Natural killer cell (primary cell): ENCODE measurements at regions of chr4 and their contacts with region 1.

Region 1: DNA sequence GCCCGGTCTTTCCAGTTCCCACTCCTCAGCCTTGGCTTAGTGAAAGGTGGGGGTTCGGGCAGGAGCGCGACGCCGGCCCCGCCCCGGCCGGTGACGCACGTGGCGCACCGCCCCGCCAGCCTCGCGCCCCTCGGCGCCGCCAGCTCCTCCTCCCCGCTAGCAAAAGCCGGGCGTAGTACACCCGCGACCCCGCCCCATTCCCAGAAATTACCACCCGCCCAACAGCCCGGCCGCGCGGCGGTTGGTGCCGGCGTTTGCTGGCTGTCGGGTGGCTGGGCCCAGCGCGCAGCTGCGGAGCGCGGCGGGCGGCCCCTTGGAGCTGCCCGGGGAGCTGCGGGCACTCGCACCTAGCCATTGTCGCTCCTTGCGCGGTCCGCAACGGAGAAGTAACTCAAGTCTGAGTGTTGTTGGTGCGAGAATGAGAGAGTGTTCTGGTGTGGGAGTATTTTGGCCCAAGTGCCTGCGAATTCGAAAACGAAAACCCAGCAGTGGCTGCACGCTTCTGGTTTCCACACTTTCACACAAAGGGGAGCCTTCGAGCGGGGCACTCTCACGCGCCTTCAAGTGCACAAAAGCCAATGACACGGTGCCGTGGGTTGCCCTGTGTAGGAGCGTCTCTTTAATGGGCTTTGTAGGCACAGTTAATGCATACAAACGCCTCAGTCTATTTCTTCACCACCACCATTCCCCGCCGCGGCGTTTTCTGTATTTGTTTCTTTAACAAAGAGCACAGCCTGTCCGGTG is 1.0 kb upstream of the ELF2 start:
- DNase-seq: peak; percentile 81 to 94
- ATAC-seq: peak; percentile 64 to 85 (median 73)
- H3K4me3 ChIP-seq: peak overlapping the region; percentile 64
- H3K4me3 Mint-ChIP-seq: peak overlapping the region; percentile 94
- H3K27ac ChIP-seq: peak overlapping the region; percentile 89
- H3K27ac Mint-ChIP-seq: peak overlapping the region; percentile 89 to 93
- H3K4me1 ChIP-seq: peaks cover 15% of the 10 kb centered on the region
- H3K4me1 Mint-ChIP-seq: peaks cover 16 to 17% of the 10 kb centered on the region in 2 donors
- H3K27me3 ChIP-seq: no peaks in the 10 kb centered on the region
- H3K27me3 Mint-ChIP-seq: no peaks in the 10 kb centered on the region
- CTCF ChIP-seq: no peak

Region 2: GRCh38 chr4:139015269-139015947 is 162.6 kb before region 1 on chr4 and contains the start of gene NOCT:
- intact Hi-C with region 1: loop called (anchors 2 kb)
- DNase-seq: peak; percentile 90 to 97
- ATAC-seq: peak; percentile 86 to 95 (median 87)
- H3K4me3 ChIP-seq: peak within 1 kb of the TSS; percentile 50
- H3K4me3 Mint-ChIP-seq: peak within 1 kb of the TSS; percentile 94
- H3K27ac ChIP-seq: peak within 1 kb of the TSS; percentile 77
- H3K27ac Mint-ChIP-seq: peak within 1 kb of the TSS; percentile 88 to 98
- H3K4me1 ChIP-seq: peaks cover 15% of the 10 kb centered on the region
- H3K4me1 Mint-ChIP-seq: peaks cover 10 to 11% of the 10 kb centered on the region in 2 donors
- H3K27me3 ChIP-seq: no peaks in the 10 kb centered on the region
- H3K27me3 Mint-ChIP-seq: peaks cover 0 to 4% of the 10 kb centered on the region in 2 donors
- CTCF ChIP-seq: no peak
- total RNA-seq, gene NOCT: 17.6 to 28.5 (median 20.9) TPM

Region 3: DNA sequence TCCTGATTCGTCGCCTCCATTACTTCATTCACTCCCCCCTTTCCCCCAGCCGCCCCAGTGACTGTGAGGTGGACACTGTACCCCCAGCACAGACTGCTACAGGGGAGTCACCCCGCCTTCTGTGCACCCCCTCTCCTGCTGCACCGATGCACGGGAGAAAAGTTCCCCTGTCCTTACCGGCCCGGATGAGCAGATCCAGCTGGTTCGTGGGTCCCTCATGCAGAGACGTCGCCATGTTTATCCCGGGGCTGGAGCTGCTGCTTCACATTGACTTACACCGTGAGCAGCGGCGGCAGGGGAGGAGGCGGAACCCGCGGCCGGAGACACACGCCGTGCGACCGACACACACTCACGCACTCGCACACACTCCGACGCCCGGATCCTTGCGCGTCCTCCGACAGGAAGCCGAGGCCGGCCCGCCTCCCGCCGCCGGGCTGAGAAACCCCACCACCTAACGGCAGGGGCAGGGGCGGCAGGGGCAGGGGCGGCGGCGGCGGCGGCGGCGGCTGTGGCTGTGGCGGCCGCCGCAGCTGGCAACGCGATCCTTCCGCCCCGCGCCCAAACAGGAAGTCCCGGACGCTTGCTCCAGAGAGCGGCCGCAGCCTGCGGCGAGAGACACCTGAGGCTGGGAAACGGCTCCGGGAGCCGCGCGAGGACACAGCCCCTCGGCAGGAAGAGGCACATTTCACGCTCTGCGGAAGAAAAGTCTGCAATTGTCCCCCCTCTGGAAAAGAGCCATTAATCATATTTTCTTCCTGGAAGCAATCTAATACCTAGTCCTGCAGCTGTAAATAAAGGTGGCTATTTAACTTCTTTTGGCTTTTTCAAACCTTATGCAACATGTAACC is 93.9 kb before region 1 on chr4:
- intact Hi-C with region 1: loop called (anchors 5 kb)
- DNase-seq: peak; percentile 73 to 91
- ATAC-seq: peak; percentile 42 to 63 (median 52)
- H3K4me3 ChIP-seq: peak overlapping the region; percentile 89
- H3K4me3 Mint-ChIP-seq: peak overlapping the region; percentile 93
- H3K27ac ChIP-seq: peak overlapping the region; percentile 93
- H3K27ac Mint-ChIP-seq: peak overlapping the region; percentile 94 to 97
- H3K4me1 ChIP-seq: peaks cover 5% of the 10 kb centered on the region
- H3K4me1 Mint-ChIP-seq: peaks cover 44 to 49% of the 10 kb centered on the region in 2 donors
- H3K27me3 ChIP-seq: no peaks in the 10 kb centered on the region
- H3K27me3 Mint-ChIP-seq: no peaks in the 10 kb centered on the region
- CTCF ChIP-seq: no peak

Region 4: DNA sequence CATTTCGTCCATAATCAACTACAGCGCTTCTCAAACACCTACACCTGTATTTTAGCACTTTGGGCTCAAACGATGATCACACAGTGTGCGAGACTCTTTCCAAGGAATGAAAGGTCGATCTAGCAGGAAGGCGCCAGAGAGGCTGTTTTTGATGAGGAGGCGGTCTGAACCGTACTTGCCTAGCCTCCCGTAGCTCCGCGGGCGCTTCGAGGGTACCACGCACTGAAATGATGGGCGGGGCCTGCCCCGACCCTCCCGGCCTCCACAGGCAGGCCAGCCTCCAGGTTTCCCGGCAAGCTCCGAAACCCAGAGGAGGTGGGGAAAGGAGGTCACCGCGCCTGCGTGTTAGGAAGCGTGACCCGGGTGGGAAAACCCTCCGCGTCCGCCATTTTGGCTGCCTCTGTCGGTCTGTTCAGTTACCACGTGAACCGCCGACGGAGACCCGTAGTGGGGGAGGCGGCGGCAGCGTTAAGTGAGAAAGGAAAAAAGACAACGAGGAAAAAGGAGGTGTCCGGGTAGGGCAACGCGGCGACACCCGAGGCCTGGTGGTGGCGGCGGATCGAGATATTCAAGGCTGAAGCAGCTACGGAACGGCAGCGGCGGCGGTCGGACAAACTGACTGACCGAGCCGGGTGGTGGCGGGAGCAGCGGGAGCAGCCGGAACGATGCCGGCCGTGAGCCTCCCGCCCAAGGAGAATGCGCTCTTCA is 123.2 kb after region 1 on chr4 and contains the start of gene NAA15:
- intact Hi-C with region 1: loop called (anchors 2 kb)
- DNase-seq: peak; percentile 93 to 99
- ATAC-seq: peak; percentile 83 to 95 (median 89)
- H3K4me3 ChIP-seq: peak within 1 kb of the TSS; percentile 90
- H3K4me3 Mint-ChIP-seq: peak within 1 kb of the TSS; percentile 97
- H3K27ac ChIP-seq: peak within 1 kb of the TSS; percentile 94
- H3K27ac Mint-ChIP-seq: peak within 1 kb of the TSS; percentile 95 to 98
- H3K4me1 ChIP-seq: peaks cover 17% of the 10 kb centered on the region
- H3K4me1 Mint-ChIP-seq: peaks cover 37 to 43% of the 10 kb centered on the region in 2 donors
- H3K27me3 ChIP-seq: no peaks in the 10 kb centered on the region
- H3K27me3 Mint-ChIP-seq: no peaks in the 10 kb centered on the region
- CTCF ChIP-seq: no peak
- total RNA-seq, gene NAA15: 56.7 to 66.3 (median 61.9) TPM

Region 5: DNA sequence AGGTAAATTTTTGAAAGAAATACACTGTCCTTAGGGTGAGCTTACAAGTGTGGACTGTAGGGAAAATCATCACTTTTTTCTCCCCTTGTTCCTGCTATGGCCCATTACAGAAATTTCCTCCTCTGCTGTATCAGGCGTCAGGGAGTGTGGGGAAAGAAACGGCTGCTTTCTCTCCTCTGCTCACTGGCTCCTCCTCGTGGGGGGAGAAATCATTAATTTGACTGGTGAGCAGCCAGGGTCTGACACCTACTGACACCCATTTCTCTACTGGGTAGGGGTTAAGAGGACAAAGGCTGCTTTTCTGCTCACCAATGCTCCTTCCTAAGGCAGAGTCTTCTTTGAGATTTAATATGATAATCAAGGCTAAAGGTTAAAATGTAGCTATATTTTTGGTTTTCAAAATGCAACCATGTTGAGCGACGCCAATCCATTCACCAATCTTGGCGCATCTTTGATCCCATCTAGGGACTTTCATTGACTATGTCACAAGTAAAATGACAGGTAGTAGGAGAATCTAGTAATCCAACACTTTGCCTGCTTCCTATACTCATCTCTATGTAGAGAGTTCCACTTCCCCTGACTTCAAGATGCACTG is 352.9 kb after region 1 on chr4:
- intact Hi-C with region 1: loop called (anchors 5 kb)
- DNase-seq: peak; percentile 46 to 77
- ATAC-seq: peak; percentile 53 to 66 (median 63)
- H3K4me3 ChIP-seq: no peak overlapping the region
- H3K4me3 Mint-ChIP-seq: no peak overlapping the region
- H3K27ac ChIP-seq: no peak overlapping the region
- H3K27ac Mint-ChIP-seq: no peak overlapping the region
- H3K4me1 ChIP-seq: peaks cover 13% of the 10 kb centered on the region
- H3K4me1 Mint-ChIP-seq: peaks cover 23 to 42% of the 10 kb centered on the region in 2 donors
- H3K27me3 ChIP-seq: no peaks in the 10 kb centered on the region
- H3K27me3 Mint-ChIP-seq: peaks cover 0 to 3% of the 10 kb centered on the region in 2 donors
- CTCF ChIP-seq: peak; percentile 82